A549 (cell line): ENCODE measurements at regions of chr7 and their contacts with region 1.

Region 1: DNA sequence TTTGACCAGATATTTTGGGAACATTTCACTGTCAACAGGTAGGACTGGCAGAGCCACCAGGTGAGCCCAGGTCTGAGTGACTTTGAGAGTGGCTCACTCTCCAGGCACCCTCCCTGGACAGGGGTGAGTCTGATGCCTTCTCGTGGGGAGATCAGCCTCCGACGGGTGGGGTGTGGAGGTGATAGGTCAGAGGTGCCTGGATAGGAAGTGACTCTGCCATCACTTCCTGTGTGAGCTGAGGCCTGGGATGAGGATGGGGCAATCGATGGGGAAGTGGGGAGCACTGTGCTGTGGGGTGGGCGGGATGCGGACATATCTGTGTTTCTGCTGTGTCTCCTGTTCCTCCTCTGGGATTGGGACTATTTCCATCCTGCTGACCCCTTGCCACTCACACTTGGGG is 34.6 kb downstream of the IFT22 start:
- DNase-seq: no peak
- ATAC-seq: no peak
- H3K4me3 ChIP-seq: no peak overlapping the region
- H3K27ac ChIP-seq: no peak overlapping the region
- H3K4me1 ChIP-seq: 0 out of 3 replicates have a peak, but pooled peaks cover 2% of the 10 kb centered on the region
- CTCF ChIP-seq: no peak
- EP300 ChIP-seq: no peak
- POLR2A ChIP-seq: no peak
- RAD21 ChIP-seq: no peak

Region 2: GRCh38 chr7:100177045-100178001 is 1109.7 kb before region 1 on chr7 and contains the starts of genes GPC2 and STAG3:
- CTCF ChIA-PET with region 1: no interaction called
- POLR2A ChIA-PET with region 1: no interaction called
- DNase-seq: peak; percentile 87 to 96
- ATAC-seq: peak; percentile 89 to 95
- H3K4me3 ChIP-seq: peak within 1 kb of the TSS; percentile 64
- H3K27ac ChIP-seq: peak within 1 kb of the TSS; percentile 68 to 83
- H3K4me1 ChIP-seq: peaks cover 9% of the 10 kb centered on the region; the same call in 2 of the 3 replicates
- CTCF ChIP-seq: no peak
- EP300 ChIP-seq: no peak
- POLR2A ChIP-seq: peak; percentile 19; the same call in 1 of the 2 replicates
- RAD21 ChIP-seq: no peak
- polyA plus RNA-seq, gene GPC2: 1.1 and 1.8 TPM in 2 replicates
- polyA plus RNA-seq, gene STAG3: 0.25 and 0.36 TPM in 2 replicates

Region 3: DNA sequence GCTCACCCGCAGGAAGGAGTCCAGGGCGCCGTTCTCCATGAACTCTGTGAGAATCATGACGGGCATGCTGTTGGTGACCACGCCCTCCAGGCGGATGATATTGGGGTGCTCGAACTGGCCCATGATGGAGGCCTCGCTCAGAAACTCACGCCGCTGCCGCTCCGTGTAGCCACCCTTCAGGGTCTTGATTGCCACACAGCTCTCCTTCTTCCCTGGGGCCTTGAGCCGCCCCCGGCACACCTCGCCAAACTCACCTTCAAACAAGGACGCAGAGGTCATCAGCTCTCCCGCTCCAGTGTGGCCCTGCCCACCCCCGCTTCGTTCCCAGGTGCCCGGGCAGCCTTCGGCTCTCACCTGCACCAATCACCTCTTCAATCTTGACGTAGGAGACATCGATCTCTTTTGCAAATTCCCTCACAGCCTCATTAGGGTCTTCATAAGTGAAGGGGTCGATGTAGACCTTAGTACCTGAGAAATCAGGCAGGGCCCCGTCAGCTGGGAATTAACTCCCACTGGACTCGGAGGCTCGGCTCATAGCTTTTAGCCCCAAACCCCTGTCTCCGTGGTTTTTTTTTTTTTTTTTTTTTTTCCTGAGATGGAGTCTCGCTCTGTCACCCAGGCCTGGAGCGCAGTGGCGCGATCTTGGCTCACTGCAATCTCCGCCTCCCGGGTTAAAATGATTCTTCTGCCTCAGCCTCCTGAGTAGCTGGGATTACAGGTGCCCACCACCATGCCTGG is 474.1 kb before region 1 on chr7:
- CTCF ChIA-PET with region 1: no interaction called
- POLR2A ChIA-PET with region 1: no interaction called
- DNase-seq: no peak
- ATAC-seq: no peak
- H3K4me3 ChIP-seq: no peak overlapping the region
- H3K27ac ChIP-seq: peak overlapping the region in 1 of 2 experiments; percentile 21; a peak in 1 of 6 replicates
- H3K4me1 ChIP-seq: peaks cover 13% of the 10 kb centered on the region; the same call in 2 of the 3 replicates
- CTCF ChIP-seq: no peak
- EP300 ChIP-seq: no peak
- POLR2A ChIP-seq: no peak
- RAD21 ChIP-seq: no peak

Region 4: DNA sequence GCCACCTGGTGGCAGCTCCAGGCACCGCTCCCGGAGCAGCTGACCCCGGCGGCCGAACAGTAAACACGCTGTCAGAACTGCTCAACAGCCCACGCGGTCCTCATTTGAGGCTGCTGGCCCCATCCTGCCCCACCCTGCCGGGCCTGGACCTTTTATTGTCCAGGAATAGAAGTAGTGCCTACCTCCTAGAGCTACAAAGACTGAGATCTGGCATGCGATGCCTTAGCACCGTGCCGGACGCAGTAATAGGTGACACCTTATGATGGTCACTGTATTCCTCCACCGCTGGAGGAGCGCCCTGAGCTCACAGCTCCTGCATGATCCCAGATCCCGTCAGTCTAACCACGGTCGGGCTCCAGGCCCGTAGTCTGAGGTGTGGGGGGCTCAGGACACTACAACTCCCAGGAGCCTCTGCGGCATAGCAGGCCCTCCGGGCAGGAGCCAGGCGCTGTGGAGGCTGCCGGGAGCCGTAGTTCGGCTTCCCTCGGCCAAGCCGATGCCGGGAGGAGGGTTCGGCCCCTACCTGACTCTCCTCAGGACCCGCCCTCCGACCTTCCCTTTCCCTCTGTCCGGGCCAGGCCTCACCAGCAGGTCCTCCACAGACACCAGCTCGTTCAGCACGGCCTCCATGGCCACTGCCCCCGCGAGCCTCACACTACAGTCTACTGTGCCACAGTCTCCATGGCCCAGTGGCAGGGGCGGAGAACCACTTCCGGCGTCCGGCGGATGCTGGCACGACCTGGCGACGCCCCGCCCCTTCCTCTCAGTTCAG is 42.5 kb before region 1 on chr7 and contains the start of gene FIS1:
- CTCF ChIA-PET with region 1: interaction called, 37 read pairs
- POLR2A ChIA-PET with region 1: interaction called, 4 read pairs
- DNase-seq: peak; percentile 85 to 93
- ATAC-seq: peak; percentile 97 to 98
- H3K4me3 ChIP-seq: peak within 1 kb of the TSS; percentile 88
- H3K27ac ChIP-seq: peak within 1 kb of the TSS; percentile 86 to 93
- H3K4me1 ChIP-seq: peaks cover 15% of the 10 kb centered on the region
- CTCF ChIP-seq: peak; percentile 75
- EP300 ChIP-seq: no peak
- POLR2A ChIP-seq: no peak; the same call in 1 of the 2 replicates
- RAD21 ChIP-seq: peak; percentile 43 to 66; a peak in 4 of 5 replicates
- polyA plus RNA-seq, gene FIS1: 111 TPM in 2 replicates

Region 5: DNA sequence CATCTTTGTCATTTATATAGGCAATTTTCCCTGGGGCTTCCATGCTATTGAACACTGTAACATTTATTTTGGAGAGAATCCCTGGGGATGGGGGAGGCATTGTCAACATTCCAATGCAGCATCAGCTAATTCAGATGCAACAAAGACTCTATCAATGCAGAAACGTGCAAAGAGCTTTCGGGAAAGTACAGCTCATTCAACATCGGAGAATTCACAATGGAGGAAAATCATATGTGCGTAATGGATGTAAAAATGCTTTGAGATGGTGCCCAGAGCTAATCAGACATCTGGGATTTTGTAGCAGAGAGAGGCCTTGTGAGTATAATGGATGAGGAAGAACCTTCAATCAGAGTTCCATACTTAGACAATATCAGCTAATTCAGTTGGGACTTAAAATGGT is 13.8 kb before region 1 on chr7:
- CTCF ChIA-PET with region 1: interaction called, 22 read pairs
- POLR2A ChIA-PET with region 1: interaction called, 4 read pairs
- DNase-seq: no peak
- ATAC-seq: no peak
- H3K4me3 ChIP-seq: no peak overlapping the region
- H3K27ac ChIP-seq: no peak overlapping the region
- H3K4me1 ChIP-seq: no peaks in the 10 kb centered on the region
- CTCF ChIP-seq: no peak
- EP300 ChIP-seq: no peak
- POLR2A ChIP-seq: no peak
- RAD21 ChIP-seq: no peak

Region 6: DNA sequence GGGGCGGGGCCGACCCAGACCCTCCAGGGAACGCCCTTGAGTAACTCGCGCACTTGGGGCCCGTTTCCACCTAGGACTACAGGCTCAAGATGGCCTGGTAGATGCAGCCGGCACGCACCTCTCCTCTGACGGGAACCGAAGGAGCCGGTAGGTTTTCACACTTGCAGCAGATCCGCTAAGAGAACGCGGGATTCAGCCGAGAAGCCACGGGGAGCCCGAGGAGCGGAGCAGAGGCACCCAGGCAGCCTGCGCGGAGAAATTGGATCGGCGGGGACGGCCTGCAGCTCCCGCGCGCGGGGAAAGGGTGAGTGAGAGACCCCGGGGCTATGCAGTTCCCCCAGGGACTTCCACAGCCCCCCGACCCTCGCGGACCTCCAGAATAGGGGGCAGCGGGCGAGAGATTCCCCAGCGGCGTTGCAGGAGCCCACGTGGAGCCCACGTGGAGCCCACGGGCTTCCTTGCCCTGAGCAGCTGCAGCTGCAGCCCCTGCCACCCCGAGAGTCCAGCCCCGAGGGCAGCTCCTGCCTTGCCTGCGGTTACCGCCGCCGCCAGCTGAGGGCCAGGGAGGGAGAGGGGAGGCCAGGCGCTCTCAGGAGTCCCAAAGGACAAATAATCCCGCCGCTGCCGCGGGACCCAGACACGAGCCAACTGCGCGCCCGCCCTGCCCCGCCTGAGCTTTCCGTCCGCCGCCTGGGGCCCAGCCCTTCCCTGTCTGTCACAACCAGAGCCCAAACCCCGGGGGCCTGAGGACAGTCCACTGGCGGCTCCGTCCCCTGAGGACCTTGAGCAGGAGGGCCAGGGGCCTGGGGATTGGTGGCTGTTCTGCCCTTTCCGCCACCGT is 21.4 kb after region 1 on chr7:
- CTCF ChIA-PET with region 1: interaction called, 14 read pairs
- POLR2A ChIA-PET with region 1: no interaction called
- DNase-seq: peak; percentile 81 to 89
- ATAC-seq: peak; percentile 97
- H3K4me3 ChIP-seq: peak overlapping the region; percentile 81
- H3K27ac ChIP-seq: peak overlapping the region; percentile 86 to 94
- H3K4me1 ChIP-seq: peaks cover 4% of the 10 kb centered on the region; the same call in 2 of the 3 replicates
- CTCF ChIP-seq: no peak
- EP300 ChIP-seq: no peak
- POLR2A ChIP-seq: peak; percentile 73
- RAD21 ChIP-seq: no peak